ENCODE measurements at regions of chr6 and their contacts with region 1.

Region 1: GRCh38 chr6:46221222-46221793 is 50.5 kb upstream of the ENPP5 start:
- DNase-seq: no peak
- H3K4me3 ChIP-seq: no peak overlapping the region
- H3K27ac ChIP-seq: no peak overlapping the region
- H3K4me1 ChIP-seq: no peaks in the 10 kb centered on the region
- H3K27me3 ChIP-seq: no peaks in the 10 kb centered on the region
- CTCF ChIP-seq: peak; percentile 19 to 81 (median 79)
- EP300 ChIP-seq: no peak
- POLR2A ChIP-seq: no peak

Region 2: DNA sequence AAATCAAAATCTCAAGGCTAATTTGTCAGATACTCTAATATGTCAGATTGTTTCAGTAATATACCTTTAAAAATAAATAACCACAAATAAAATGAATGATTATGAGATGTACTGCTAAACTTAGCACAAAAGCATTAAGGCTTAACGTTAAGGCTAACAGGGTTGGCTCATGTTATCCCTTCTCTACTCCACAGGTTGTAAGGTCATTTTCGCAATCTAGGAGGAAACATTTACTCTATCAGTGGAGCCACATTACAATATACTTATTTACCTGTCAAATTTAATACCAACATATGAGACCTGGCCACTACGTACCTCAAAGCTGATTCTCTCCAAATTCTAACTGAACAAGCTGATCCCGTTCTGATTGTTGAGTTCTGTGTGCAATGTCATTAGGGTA is 174.2 kb after region 1 on chr6:
- intact Hi-C with region 1: loop called in 1 of 4 experiments (anchors 5 kb)
- DNase-seq: no peak
- H3K4me3 ChIP-seq: no peak overlapping the region
- H3K27ac ChIP-seq: no peak overlapping the region
- H3K4me1 ChIP-seq: no peaks in the 10 kb centered on the region
- H3K27me3 ChIP-seq: no peaks in the 10 kb centered on the region
- CTCF ChIP-seq: no peak
- EP300 ChIP-seq: no peak
- POLR2A ChIP-seq: no peak

Region 3: DNA sequence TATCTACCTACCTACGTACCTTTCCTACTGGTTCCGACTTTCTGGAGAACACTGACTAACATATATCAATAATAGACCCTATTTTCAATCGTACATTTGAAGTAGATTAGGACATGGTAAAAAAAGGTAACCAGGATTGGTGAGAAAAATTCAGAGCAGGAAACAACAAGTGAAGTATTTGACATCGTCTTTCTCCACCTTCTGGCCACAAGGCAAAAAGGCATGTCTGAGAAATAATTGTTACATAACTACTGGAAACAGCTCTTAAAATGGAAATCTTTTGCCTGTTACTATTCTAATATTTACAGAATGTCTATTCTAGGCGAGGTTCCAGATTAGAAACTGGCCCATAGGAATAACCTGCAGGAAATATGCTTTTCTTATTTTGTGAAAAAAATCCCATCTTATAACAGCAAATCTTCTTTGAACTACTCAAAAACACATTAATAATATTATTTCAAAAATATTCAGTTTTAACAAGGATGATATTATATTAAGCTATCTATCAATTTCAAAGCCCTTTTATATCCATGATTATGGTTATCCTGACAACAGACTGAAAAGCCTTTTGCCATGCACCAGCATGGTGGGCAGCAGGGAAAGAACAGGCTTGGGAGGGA is 189.1 kb after region 1 on chr6:
- intact Hi-C with region 1: loop called (anchors 2 to 10 kb)
- DNase-seq: peak in 3 of 5 donors; percentile 30 to 37 (median 31)
- H3K4me3 ChIP-seq: no peak overlapping the region
- H3K27ac ChIP-seq: peak overlapping the region in 1 of 2 donors; percentile 46
- H3K4me1 ChIP-seq: peaks cover 4% of the 10 kb centered on the region
- H3K27me3 ChIP-seq: no peaks in the 10 kb centered on the region
- CTCF ChIP-seq: peak; percentile 34 to 93 (median 89)
- EP300 ChIP-seq: no peak
- POLR2A ChIP-seq: no peak

Region 4: DNA sequence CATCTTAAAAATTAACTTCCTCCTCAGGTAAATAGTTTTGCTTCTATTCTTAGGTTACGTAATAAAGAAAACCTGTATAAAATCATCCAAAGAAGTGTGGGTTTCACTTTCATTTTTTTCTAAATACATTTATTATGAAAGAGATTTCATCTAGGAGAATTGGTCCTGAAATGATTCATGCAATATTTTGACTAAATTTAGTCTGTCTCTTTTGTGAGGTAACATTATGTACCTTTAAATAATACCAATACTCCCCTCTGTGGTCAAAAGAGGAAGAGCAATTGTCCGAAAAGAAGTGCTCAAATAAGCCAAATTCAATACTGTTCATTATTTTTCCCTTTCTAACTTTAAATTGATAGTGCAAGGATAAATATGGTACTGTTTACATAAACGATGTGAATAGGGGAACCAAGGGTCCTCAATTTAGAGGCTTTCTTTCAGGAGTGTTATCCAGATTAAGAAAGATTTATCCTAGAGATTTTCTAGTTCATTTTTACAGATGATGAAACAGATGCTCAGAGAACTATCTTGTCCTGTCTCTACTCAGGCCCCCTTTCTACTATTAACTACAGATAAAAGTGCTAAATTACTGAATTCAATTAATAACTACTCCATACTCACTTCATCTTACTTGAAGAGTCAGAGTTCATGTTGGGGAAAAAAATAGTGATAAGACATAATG is 405.1 kb after region 1 on chr6:
- intact Hi-C with region 1: loop called in 1 of 4 experiments (anchors 10 kb)
- DNase-seq: no peak
- H3K4me3 ChIP-seq: no peak overlapping the region
- H3K27ac ChIP-seq: no peak overlapping the region
- H3K4me1 ChIP-seq: no peaks in the 10 kb centered on the region
- H3K27me3 ChIP-seq: no peaks in the 10 kb centered on the region
- CTCF ChIP-seq: peak; percentile 28 to 75 (median 46)
- EP300 ChIP-seq: no peak
- POLR2A ChIP-seq: no peak

Region 5: GRCh38 chr6:46781478-46782378 is 560.4 kb after region 1 on chr6:
- intact Hi-C with region 1: loop called in 2 of 4 experiments (anchors 5 to 10 kb)
- DNase-seq: peak in 4 of 5 donors; percentile 17 to 53 (median 26)
- H3K4me3 ChIP-seq: no peak overlapping the region
- H3K27ac ChIP-seq: no peak overlapping the region
- H3K4me1 ChIP-seq: no peaks in the 10 kb centered on the region
- H3K27me3 ChIP-seq: no peaks in the 10 kb centered on the region
- CTCF ChIP-seq: peak in 2 of 3 donors; percentile 30 to 37
- EP300 ChIP-seq: no peak
- POLR2A ChIP-seq: no peak

Measured in ovary (tissue), 10 donors.